CD8-positive, alpha-beta T cell (primary cell): ENCODE measurements at regions of chr19 and their contacts with region 1.

Region 1: GRCh38 chr19:12945479-12946091 is at the start of gene RAD23A:
- DNase-seq: peak; percentile 97 to 100 (median 98)
- ATAC-seq: peak; percentile 86
- H3K4me3 ChIP-seq: peak within 1 kb of the TSS; percentile 60 to 64
- H3K4me3 Mint-ChIP-seq: peak within 1 kb of the TSS; percentile 91
- H3K27ac ChIP-seq: peak within 1 kb of the TSS; percentile 67 to 83
- H3K27ac Mint-ChIP-seq: peak within 1 kb of the TSS; percentile 96
- H3K4me1 ChIP-seq: peaks cover 35% of the 10 kb centered on the region
- H3K4me1 Mint-ChIP-seq: peaks cover 43% of the 10 kb centered on the region
- H3K27me3 ChIP-seq: no peaks in the 10 kb centered on the region
- H3K27me3 Mint-ChIP-seq: no peaks in the 10 kb centered on the region
- CTCF ChIP-seq: no peak
- total RNA-seq, gene RAD23A: 86.3 to 90.8 TPM

Region 2: DNA sequence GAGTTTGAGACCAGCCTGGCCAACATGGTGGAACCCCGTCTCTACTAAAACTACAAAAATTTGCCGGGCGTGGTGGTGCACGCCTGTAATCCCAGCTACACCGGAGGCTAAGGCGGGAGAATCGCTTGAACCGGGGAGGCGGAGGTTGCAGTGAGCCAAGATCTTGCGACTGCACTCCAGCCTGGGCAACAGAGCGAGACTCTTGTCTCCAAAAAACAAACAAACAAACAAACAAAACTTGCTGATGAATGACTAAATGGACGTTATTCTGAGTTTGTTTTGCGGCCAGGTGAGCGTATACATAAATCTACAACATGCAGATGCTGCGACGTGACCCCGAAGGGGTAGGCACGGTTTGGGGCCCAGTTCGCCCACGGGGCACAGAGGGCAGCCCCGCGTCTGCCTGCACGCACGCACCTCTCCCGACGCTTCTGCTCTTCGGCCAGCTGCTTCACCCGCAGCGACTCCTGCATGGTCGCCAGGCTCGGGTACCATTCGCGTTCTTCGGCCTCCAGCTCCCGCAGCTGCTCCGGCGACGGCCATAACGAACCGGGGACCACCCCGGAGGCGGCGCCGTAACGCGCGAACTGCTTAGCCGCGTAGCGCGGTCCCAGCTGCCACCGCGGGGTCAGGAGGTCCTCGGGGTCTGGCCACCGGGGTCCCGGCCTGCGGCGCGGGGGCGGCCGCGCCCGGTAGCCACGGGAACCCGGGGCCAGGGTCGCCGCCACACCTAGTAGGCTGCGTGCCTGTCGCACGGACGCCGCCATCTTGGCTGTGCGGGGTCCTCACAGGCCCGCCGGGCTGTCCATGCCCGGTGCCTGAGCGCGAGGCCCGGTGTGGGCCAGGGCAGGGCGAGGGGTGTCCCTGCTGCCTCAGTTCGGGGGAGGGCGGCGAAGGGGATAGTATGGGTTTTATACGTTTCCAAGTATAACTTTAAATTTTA is 11.1 kb after region 1 on chr19 and contains the start of gene GADD45GIP1:
- CTCF ChIA-PET with region 1: no interaction called
- POLR2A ChIA-PET with region 1: interaction called, 7 read pairs
- intact Hi-C with region 1: loop called in 1 of 2 experiments (anchors 1 kb)
- DNase-seq: peak; percentile 68 to 88 (median 77)
- ATAC-seq: peak; percentile 99
- H3K4me3 ChIP-seq: peak within 1 kb of the TSS; percentile 84 to 86
- H3K4me3 Mint-ChIP-seq: peak within 1 kb of the TSS; percentile 83
- H3K27ac ChIP-seq: peak within 1 kb of the TSS; percentile 70 to 78
- H3K27ac Mint-ChIP-seq: peak within 1 kb of the TSS; percentile 91
- H3K4me1 ChIP-seq: peaks cover 13% of the 10 kb centered on the region
- H3K4me1 Mint-ChIP-seq: peaks cover 29% of the 10 kb centered on the region
- H3K27me3 ChIP-seq: no peaks in the 10 kb centered on the region
- H3K27me3 Mint-ChIP-seq: no peaks in the 10 kb centered on the region
- CTCF ChIP-seq: no peak
- total RNA-seq, gene GADD45GIP1: 13.2 to 14.4 TPM